Activated naive CD4-positive, alpha-beta T cell treated with anti-CD3 and anti-CD28 coated beads for 36 hours (primary cell): ENCODE measurements at regions of chr22 and their contacts with region 1.

Region 1: DNA sequence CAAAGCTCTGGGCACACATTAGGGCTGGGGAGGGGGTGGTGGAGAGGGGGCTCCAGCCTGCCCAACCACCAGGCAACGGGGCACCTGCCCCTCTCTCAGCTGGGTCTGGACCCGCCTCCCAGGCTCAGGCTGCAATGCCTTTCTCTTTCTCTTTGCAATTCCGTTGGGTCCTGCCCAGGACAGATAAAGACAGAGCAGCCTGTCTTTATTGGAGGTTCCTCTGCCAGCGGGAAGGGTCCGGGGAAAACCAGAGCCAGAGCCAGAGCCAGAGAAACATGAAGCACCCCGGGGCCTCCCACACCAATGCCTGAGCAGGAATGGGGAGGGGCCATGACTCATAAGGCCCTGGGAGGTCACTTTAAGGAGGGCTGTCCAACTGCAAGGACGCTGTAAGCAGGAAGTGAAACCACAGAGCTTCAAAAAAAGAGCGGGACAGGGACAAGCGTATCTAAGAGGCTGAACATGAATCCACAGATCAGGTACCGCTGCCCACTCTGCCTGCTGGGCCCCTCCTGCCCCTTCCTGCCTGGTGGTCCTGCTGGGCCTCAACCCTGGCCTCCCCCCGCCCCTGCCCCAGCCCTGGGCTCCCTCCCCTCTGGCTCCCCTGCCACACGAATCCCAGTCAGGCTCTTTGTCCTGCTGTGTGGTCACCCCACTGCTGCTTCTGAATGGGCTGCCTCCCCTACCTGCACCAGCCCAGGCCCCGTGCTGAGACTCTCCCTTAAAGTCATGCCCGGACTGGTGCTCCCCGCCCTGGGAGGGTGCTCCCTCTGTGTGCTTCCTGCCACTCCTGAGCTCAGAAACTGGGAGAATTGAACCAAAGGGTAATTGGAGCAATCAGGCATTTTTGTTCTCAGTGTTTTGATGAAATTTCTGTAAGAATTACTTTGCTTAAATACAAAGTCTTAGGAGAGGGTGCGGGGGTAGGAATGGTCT is at the start of gene APOBEC3B:
- DNase-seq: peak; percentile 87
- H3K4me3 Mint-ChIP-seq: peak within 1 kb of the TSS; percentile 60
- H3K27ac Mint-ChIP-seq: peak within 1 kb of the TSS; percentile 75
- H3K4me1 Mint-ChIP-seq: peaks cover 52% of the 10 kb centered on the region
- H3K27me3 Mint-ChIP-seq: no peaks in the 10 kb centered on the region
- total RNA-seq, gene APOBEC3B: 5.5 to 6.0 TPM

Region 2: GRCh38 chr22:38941488-38941987 is 40.7 kb before region 1 on chr22:
- CTCF ChIA-PET with region 1: no interaction called
- intact Hi-C with region 1: loop called (anchors 1 kb)
- DNase-seq: peak; percentile 83
- H3K4me3 Mint-ChIP-seq: peak overlapping the region; percentile 39
- H3K27ac Mint-ChIP-seq: peak overlapping the region; percentile 83
- H3K4me1 Mint-ChIP-seq: peaks cover 36% of the 10 kb centered on the region
- H3K27me3 Mint-ChIP-seq: peaks cover 25% of the 10 kb centered on the region

Region 3: GRCh38 chr22:38953577-38954413 is 28.5 kb before region 1 on chr22:
- CTCF ChIA-PET with region 1: interaction called, 3 read pairs
- intact Hi-C with region 1: loop called (anchors 1 kb)
- DNase-seq: peak; percentile 94
- H3K4me3 Mint-ChIP-seq: peak overlapping the region; percentile 55
- H3K27ac Mint-ChIP-seq: peak overlapping the region; percentile 91
- H3K4me1 Mint-ChIP-seq: peaks cover 22% of the 10 kb centered on the region
- H3K27me3 Mint-ChIP-seq: no peaks in the 10 kb centered on the region

Region 4: DNA sequence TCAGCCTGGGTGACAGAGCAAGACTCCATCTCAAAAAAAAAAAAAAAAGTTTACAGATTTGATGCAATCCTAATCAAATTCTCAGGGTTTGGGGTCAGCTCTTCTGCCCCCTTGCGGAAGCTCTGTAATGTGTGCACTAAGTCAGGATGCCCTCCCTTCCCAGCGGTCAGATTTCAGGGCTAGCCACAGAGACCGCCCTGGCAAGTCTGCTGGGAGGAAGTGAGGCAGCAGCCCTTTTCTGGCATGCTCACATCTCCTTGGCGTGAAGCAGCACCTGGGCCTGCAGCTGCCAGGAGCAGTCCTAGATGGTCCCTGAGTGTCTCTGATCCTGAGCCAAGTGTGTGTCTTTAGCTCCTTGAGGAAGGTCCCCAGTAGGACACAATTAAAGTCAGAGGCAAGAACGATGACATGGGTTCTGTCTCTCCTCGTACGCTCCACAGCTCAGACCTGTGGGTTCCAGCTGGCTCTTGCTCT is 20.9 kb after region 1 on chr22:
- CTCF ChIA-PET with region 1: interaction called, 10 read pairs
- intact Hi-C with region 1: loop called (anchors 1 kb)
- DNase-seq: peak; percentile 86
- H3K4me3 Mint-ChIP-seq: no peak overlapping the region
- H3K27ac Mint-ChIP-seq: no peak overlapping the region
- H3K4me1 Mint-ChIP-seq: peaks cover 9% of the 10 kb centered on the region
- H3K27me3 Mint-ChIP-seq: no peaks in the 10 kb centered on the region

Region 5: GRCh38 chr22:39013942-39014722 is 31.9 kb after region 1 on chr22 and contains the start of gene APOBEC3C:
- CTCF ChIA-PET with region 1: interaction called, 4 read pairs
- intact Hi-C with region 1: loop called (anchors 2 kb)
- DNase-seq: peak; percentile 93
- H3K4me3 Mint-ChIP-seq: peak within 1 kb of the TSS; percentile 89
- H3K27ac Mint-ChIP-seq: peak within 1 kb of the TSS; percentile 95
- H3K4me1 Mint-ChIP-seq: peaks cover 34% of the 10 kb centered on the region
- H3K27me3 Mint-ChIP-seq: no peaks in the 10 kb centered on the region
- total RNA-seq, gene APOBEC3C: 71.5 to 74.1 TPM

Region 6: DNA sequence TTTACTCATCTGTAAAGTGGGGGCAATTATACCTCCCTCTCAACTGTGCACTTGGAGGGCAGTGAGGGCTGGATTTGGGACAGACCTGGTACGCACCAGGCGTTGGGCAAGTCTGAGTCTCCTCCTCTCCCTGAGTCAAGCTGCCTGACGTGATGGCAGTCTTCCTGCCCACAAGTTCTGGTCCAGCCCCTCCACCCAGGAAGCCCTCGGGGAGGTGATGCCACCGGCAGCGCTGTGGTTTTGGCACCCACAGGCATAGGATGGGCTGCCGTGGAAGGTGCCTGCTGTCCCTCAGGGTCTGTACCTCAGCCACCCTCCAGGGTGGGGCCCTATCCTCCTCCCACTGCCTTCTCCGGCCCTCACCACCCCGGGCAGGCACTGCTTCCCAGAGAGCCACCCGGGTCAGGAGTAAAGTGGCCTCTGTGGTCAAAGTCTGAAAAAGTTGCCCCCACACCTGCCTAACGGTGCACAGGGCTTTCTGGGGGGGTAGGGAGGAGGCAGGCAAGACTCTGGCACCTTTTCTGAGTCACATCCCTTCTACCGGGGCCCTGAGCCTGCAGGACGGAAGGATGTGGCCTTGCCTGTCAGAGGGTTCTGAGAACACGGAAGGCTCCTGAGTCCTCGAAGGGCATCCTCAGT is 108.3 kb after region 1 on chr22:
- CTCF ChIA-PET with region 1: no interaction called
- intact Hi-C with region 1: loop called (anchors 1 kb)
- DNase-seq: peak; percentile 94
- H3K4me3 Mint-ChIP-seq: peak overlapping the region; percentile 54
- H3K27ac Mint-ChIP-seq: peak overlapping the region; percentile 91
- H3K4me1 Mint-ChIP-seq: peaks cover 72% of the 10 kb centered on the region
- H3K27me3 Mint-ChIP-seq: no peaks in the 10 kb centered on the region

Region 7: DNA sequence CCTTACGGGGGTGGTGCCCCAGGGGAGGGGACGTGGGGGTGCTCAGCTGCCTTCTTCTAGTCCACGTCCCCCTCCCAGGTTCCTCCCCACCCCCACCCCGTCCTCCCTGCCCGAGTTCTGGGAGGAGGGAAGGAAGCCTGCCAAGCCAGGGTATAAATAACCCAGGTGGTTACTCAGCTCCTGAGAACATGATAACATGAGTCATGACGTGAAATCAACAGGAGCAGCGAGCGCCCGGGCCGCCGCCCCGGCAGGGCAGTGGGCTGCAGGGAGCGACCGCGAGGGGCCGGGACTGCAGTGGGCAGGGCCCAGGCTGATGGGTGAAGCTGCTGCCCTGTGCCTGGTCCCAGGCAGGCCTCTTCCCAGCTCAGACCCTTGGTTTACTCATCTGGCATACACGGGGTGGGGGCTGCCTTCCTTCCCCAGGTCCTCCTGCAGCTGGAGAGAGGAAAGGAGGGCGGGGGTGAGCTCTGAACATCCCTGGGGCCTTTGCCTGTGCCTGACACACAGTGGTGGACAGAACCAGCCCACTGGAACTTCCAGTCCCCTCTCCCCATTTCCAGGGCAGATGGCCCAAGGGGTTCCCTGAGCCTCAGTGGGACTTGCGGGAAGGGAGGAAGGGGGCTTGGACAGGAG is 271.3 kb after region 1 on chr22:
- CTCF ChIA-PET with region 1: no interaction called
- intact Hi-C with region 1: no loop called
- DNase-seq: peak; percentile 68
- H3K4me3 Mint-ChIP-seq: no peak overlapping the region
- H3K27ac Mint-ChIP-seq: no peak overlapping the region
- H3K4me1 Mint-ChIP-seq: peaks cover 26% of the 10 kb centered on the region
- H3K27me3 Mint-ChIP-seq: peaks cover 8% of the 10 kb centered on the region